ENCODE measurements at regions of chr3 and their contacts with region 1.

Region 1: DNA sequence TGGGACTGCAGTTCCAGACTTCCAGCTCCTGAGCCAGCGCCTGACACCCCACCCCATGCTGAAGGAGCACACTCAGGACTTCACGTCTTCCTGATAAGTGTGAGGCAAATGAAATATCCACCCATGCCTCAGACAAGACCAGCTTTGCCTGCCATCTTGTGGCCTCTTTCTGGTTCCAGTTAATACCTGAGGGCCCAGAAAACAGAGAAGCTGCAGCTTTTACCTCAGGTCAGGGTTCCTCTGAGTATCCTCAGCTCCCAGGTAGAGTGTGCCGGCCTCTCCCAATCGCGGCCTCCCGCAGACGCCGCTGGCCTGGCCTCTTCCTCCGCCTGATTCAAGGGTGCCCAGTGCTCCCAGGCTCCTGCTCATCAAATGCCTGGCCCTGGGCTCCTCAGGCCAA is 5.1 kb upstream of the KLHL6 start:
- DNase-seq: peak; percentile 49
- ATAC-seq: no peak
- H3K4me3 Mint-ChIP-seq: no peak overlapping the region
- H3K27ac Mint-ChIP-seq: no peak overlapping the region
- H3K4me1 Mint-ChIP-seq: peaks cover 21% of the 10 kb centered on the region
- H3K27me3 Mint-ChIP-seq: no peaks in the 10 kb centered on the region

Region 2: DNA sequence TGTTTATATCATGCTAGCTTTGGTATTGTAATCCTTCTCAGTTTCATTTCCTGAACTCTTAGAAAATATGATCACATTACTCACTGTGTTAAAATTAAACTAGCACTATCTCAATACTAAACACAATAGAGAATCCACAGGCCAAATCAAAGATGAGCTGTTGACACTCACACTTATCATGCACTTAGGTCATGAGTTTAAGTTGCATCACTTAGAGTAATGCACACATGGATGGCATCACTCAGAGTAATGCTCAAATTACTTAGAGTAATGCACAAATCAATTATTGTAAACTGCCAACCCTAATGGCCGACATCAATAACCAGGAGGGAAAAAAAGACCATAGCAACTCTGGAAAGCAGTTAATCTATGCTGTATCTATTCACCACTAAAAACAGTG is 92.2 kb before region 1 on chr3:
- CTCF ChIA-PET with region 1: interaction called, 15 read pairs
- POLR2A ChIA-PET with region 1: interaction called, 4 read pairs
- DNase-seq: no peak
- ATAC-seq: no peak
- H3K4me3 Mint-ChIP-seq: no peak overlapping the region
- H3K27ac Mint-ChIP-seq: no peak overlapping the region
- H3K4me1 Mint-ChIP-seq: peaks cover 17% of the 10 kb centered on the region
- H3K27me3 Mint-ChIP-seq: peaks cover 3% of the 10 kb centered on the region

Region 3: GRCh38 chr3:183475016-183475763 is 85.4 kb before region 1 on chr3:
- CTCF ChIA-PET with region 1: interaction called, 14 read pairs
- POLR2A ChIA-PET with region 1: no interaction called
- DNase-seq: no peak
- ATAC-seq: no peak
- H3K4me3 Mint-ChIP-seq: no peak overlapping the region
- H3K27ac Mint-ChIP-seq: no peak overlapping the region
- H3K4me1 Mint-ChIP-seq: peaks cover under 1% of the 10 kb centered on the region
- H3K27me3 Mint-ChIP-seq: peaks cover 3% of the 10 kb centered on the region

Region 4: GRCh38 chr3:183481582-183481981 is 79.0 kb before region 1 on chr3:
- CTCF ChIA-PET with region 1: interaction called, 15 read pairs
- POLR2A ChIA-PET with region 1: no interaction called
- DNase-seq: no peak
- ATAC-seq: no peak
- H3K4me3 Mint-ChIP-seq: no peak overlapping the region
- H3K27ac Mint-ChIP-seq: no peak overlapping the region
- H3K4me1 Mint-ChIP-seq: peaks cover 3% of the 10 kb centered on the region
- H3K27me3 Mint-ChIP-seq: no peaks in the 10 kb centered on the region

Region 5: DNA sequence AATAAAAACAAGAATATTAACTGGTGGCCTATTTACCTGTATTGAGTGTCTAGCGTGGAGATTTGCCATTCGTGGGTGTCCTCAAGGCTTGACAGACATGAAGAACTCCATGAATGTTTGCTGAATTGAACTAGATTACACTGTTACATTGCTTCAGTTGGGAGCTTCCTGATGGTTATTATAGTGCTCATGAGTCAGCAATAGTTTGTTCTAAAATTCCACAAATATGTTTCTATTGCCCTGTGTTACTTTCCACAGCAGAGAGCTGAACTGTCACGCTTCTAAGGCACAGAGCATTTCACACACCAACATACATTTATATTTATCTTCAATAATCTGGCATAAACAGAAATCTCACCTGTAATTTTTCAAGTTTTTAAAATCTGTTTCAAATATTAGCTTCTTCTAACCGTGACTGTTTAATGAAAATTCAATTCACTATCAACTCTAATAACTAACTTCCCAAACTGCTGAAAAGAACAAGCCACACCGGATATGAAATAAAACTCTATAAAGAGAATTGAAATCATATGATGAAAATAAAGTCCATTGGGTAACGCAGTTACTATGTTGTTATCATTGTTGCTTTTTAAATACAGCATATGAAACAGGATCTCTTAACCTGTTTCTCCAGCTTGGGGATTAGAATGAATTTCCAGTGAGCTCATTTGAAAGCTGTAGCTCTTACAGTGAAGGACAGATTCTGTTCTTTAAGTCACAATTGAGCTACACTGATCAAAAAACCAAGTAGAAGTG is 71.0 kb before region 1 on chr3:
- CTCF ChIA-PET with region 1: interaction called, 11 read pairs
- POLR2A ChIA-PET with region 1: no interaction called
- DNase-seq: no peak
- ATAC-seq: no peak
- H3K4me3 Mint-ChIP-seq: no peak overlapping the region
- H3K27ac Mint-ChIP-seq: no peak overlapping the region
- H3K4me1 Mint-ChIP-seq: peaks cover 3% of the 10 kb centered on the region
- H3K27me3 Mint-ChIP-seq: no peaks in the 10 kb centered on the region